Activated B cell treated with CpG ODN at 0.5 μM for 24 hours (primary cell): ENCODE measurements at regions of chr10 and their contacts with region 1.

Region 1: DNA sequence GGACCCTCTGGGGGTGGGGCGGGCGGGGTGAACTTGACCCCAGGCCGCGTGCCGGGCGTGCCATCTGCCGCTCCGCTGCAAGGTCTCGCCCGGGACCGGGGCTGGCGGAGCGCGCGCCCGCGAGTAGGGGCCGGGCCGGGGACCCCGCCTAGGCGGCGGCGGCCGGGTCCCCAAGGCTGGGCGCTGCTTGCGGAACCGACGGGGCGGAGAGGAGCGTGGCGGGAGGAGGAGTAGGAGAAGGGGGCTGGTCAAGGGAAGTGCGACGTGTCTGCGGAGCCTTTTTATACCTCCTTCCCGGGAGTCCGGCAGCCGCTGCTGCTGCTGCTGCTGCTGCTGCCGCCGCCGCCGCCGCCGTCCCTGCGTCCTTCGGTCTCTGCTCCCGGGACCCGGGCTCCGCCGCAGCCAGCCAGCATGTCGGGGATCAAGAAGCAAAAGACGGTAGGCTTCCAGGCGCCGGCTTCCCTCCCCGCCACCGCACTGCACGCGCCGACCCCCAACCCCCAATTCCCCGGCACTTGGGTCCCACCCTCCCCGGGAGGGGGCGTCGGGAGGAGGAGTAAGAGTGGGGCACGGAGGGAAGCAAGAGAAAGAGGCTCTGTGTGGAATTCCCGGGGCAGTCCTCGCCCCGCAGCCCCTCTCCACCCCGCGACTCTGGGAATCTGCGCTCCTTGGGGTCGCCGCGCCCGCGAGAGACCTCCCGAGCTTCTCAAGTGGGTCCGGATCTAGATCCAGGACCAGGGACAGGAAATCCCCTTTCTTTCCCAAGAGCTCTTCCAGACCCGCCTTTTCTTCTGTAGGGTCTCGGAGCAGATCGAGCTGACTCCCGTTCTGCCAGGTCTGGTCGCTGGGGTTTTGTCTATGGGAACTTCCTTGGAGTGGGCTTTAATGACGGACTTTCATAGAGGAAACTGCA is at the start of gene PAPSS2:
- DNase-seq: peak; percentile 32
- ATAC-seq: peak; percentile 49
- H3K4me3 Mint-ChIP-seq: peak within 1 kb of the TSS; percentile 82
- H3K27ac Mint-ChIP-seq: no peak within 1 kb of the TSS
- H3K4me1 Mint-ChIP-seq: peaks cover 13% of the 10 kb centered on the region
- H3K27me3 Mint-ChIP-seq: peaks cover 38% of the 10 kb centered on the region
- CTCF ChIP-seq: no peak
- total RNA-seq, gene PAPSS2: not detected in 2 replicates

Region 2: GRCh38 chr10:87531908-87532622 is 127.8 kb before region 1 on chr10:
- CTCF ChIA-PET with region 1: no interaction called
- POLR2A ChIA-PET with region 1: no interaction called
- intact Hi-C with region 1: loop called (anchors 5 kb)
- DNase-seq: no peak
- ATAC-seq: no peak
- H3K4me3 Mint-ChIP-seq: no peak overlapping the region
- H3K27ac Mint-ChIP-seq: no peak overlapping the region
- H3K4me1 Mint-ChIP-seq: no peaks in the 10 kb centered on the region
- H3K27me3 Mint-ChIP-seq: no peaks in the 10 kb centered on the region
- CTCF ChIP-seq: no peak

Region 3: GRCh38 chr10:87559392-87559791 is 100.4 kb before region 1 on chr10:
- CTCF ChIA-PET with region 1: no interaction called
- POLR2A ChIA-PET with region 1: no interaction called
- intact Hi-C with region 1: no loop called
- DNase-seq: no peak
- ATAC-seq: no peak
- H3K4me3 Mint-ChIP-seq: no peak overlapping the region
- H3K27ac Mint-ChIP-seq: no peak overlapping the region
- H3K4me1 Mint-ChIP-seq: no peaks in the 10 kb centered on the region
- H3K27me3 Mint-ChIP-seq: no peaks in the 10 kb centered on the region
- CTCF ChIP-seq: no peak

Region 4: DNA sequence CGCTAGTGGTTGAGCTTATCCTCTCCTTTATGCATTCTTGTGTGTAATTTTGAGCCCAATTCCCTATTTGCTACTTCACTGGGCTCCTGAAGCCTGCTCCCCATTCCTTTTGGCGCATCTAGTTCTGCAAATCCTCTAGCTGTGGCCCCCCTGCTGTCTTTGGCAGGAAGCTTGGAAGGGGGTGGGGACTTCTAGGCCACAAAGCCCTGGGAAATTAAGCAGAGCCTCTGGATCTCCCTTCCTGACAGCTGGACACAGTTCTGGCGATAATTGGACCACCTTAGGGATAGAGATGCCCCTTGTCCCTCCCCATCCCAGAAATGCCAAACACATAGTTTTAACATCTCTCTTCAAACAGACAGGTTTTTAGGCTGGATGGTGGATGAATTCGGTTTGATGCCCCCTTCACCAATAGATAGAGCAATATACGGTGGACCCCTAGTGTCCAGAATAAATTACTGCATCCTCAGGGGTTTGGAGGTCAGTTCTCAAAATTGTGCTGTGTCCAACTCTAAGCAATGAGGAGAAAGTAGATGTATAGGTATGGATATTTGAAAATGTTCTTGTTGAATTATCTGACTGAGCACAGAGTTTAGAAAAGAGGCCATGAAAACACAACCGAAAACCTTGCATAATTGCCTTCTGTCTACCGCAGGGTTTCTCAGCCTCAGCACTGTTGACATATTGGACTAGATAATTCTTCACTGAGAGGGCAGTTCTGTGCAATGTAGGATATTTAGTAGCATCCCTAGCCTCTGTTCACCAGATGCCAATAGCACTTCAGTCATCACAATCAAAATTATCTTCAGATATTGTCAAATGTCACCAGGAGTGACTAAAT is 75.4 kb after region 1 on chr10:
- CTCF ChIA-PET with region 1: no interaction called
- POLR2A ChIA-PET with region 1: no interaction called
- intact Hi-C with region 1: loop called (anchors 1 kb)
- DNase-seq: no peak
- ATAC-seq: peak; percentile 52
- H3K4me3 Mint-ChIP-seq: no peak overlapping the region
- H3K27ac Mint-ChIP-seq: no peak overlapping the region
- H3K4me1 Mint-ChIP-seq: no peaks in the 10 kb centered on the region
- H3K27me3 Mint-ChIP-seq: peaks cover 10% of the 10 kb centered on the region
- CTCF ChIP-seq: peak; percentile 23

Region 5: DNA sequence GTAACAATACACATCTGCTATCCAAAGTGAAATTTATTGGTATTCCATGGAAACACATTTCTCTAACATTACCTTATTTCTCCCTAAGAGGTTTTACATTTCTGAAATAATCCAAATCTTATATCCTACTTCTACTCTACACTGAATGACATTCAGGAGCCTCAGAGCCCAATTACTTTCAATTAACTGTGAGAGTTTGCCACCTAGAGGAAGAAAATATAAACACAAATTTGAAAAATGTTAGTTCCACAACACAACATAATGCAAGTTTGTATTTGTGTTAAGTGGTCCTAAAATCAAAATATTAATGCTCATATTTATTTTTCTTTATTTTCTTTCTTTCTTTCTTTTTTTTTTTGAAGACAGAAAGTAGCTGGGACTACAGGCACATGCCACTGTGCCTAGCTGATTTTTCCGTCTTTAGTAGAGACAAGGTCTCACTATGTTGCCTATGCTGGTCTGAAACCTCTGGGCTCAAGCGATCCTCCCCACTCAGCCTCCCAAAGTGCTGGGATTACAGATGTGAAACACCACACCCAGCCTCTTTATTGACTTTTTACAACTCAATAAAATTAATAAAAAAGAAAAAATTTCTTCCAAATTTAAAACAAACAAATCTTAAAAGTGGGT is 112.2 kb after region 1 on chr10:
- CTCF ChIA-PET with region 1: no interaction called
- POLR2A ChIA-PET with region 1: no interaction called
- intact Hi-C with region 1: loop called (anchors 1 kb)
- DNase-seq: no peak
- ATAC-seq: no peak
- H3K4me3 Mint-ChIP-seq: no peak overlapping the region
- H3K27ac Mint-ChIP-seq: no peak overlapping the region
- H3K4me1 Mint-ChIP-seq: peaks cover 7% of the 10 kb centered on the region
- H3K27me3 Mint-ChIP-seq: no peaks in the 10 kb centered on the region
- CTCF ChIP-seq: peak; percentile 27

Region 6: DNA sequence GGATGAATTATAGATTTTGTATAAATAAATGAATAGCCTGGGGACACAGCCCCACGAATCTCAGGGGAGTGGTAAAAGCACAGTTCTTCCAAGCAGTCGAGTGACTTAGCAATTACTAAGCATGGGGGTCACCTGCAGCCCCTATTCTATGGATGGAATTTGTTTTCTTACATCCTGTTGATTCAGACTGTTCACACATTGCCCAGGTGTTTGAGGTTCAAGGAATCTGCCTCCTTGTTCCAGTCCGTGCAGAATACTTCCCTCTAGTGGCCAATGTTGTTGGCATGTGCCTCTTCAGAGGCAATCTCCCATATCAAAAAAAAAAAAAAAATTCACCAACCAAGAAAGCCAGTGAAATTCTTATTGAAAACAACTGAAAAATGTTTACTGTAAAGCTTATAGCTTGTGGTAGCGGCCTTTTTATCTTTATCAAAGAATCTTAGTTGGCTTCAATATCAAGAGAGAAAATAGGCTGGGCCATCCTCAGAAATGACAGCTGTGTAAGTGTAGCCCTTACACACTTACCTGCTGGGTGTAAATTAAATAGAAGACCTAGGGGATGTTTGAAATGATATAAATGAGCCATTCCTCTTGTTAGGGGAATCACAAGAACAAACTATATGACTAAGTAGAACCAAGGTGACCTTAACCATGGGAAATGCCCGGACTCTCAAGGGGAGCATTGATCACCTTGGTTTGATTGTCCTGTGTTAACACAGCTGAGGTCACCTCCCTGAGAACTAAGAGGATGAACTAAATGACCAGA is 1150.6 kb after region 1 on chr10:
- CTCF ChIA-PET with region 1: no interaction called
- POLR2A ChIA-PET with region 1: no interaction called
- intact Hi-C with region 1: loop called (anchors 1 kb)
- DNase-seq: no peak
- ATAC-seq: peak; percentile 50
- H3K4me3 Mint-ChIP-seq: no peak overlapping the region
- H3K27ac Mint-ChIP-seq: no peak overlapping the region
- H3K4me1 Mint-ChIP-seq: peaks cover 5% of the 10 kb centered on the region
- H3K27me3 Mint-ChIP-seq: no peaks in the 10 kb centered on the region
- CTCF ChIP-seq: no peak